ENCODE measurements at regions of chr3 and their contacts with region 1.

Region 1: GRCh38 chr3:73086071-73086494 is 24.6 kb downstream of the EBLN2 start:
- DNase-seq: peak; percentile 70
- ATAC-seq: peak; percentile 72
- H3K4me3 Mint-ChIP-seq: no peak overlapping the region
- H3K27ac Mint-ChIP-seq: no peak overlapping the region
- H3K4me1 Mint-ChIP-seq: peaks cover 8% of the 10 kb centered on the region
- H3K27me3 Mint-ChIP-seq: no peaks in the 10 kb centered on the region

Region 2: DNA sequence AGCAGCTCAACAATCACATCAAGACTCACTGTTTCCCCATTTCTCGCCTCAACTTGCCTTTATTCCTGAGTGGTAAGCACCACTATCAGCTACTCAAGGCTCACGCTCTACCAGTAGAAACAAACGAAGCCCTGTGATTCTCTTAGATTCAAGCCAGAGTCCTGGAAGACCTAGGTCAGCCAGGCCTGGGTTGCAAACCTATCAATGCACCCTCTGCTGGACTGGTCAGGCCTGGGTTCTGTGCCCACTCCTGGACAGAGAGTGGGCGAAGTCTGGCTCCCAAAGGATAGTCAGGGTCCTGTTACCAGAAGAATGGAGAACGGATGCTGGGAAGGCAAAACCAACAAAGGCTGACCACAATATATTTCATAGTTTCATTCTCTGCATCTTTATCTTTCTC is 546.2 kb before region 1 on chr3:
- CTCF ChIA-PET with region 1: no interaction called
- POLR2A ChIA-PET with region 1: no interaction called
- intact Hi-C with region 1: no loop called
- DNase-seq: no peak
- ATAC-seq: no peak
- H3K4me3 Mint-ChIP-seq: no peak overlapping the region
- H3K27ac Mint-ChIP-seq: no peak overlapping the region
- H3K4me1 Mint-ChIP-seq: peaks cover 23% of the 10 kb centered on the region
- H3K27me3 Mint-ChIP-seq: peaks cover 5% of the 10 kb centered on the region

Region 3: DNA sequence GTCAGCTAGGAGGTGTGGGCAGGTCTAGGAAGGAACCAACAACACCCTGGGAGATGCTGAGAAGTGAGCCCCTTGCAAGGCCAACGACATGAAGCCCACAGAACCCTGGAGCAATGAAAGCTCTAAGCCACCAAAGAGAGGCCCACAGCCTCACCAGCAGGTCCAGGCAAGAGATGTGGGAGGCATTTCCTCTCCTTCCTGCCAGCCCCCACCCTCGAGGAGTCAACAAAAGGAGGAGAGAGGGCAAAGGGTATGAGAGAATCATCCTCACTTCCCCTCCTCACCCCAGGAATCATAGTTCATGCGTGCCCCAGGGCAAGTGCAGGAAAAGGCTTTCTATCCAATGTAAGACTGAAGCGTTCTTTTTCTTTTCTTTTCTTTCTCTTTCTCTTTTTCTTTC is 433.7 kb before region 1 on chr3:
- CTCF ChIA-PET with region 1: no interaction called
- POLR2A ChIA-PET with region 1: no interaction called
- intact Hi-C with region 1: no loop called
- DNase-seq: no peak
- ATAC-seq: no peak
- H3K4me3 Mint-ChIP-seq: no peak overlapping the region
- H3K27ac Mint-ChIP-seq: no peak overlapping the region
- H3K4me1 Mint-ChIP-seq: peaks cover 3% of the 10 kb centered on the region
- H3K27me3 Mint-ChIP-seq: peaks cover 9% of the 10 kb centered on the region

Region 4: GRCh38 chr3:72665701-72666443 is 420.2 kb before region 1 on chr3:
- CTCF ChIA-PET with region 1: interaction called, 8 read pairs
- POLR2A ChIA-PET with region 1: no interaction called
- intact Hi-C with region 1: loop called (anchors 2 to 10 kb)
- DNase-seq: peak; percentile 76
- ATAC-seq: peak; percentile 81
- H3K4me3 Mint-ChIP-seq: no peak overlapping the region
- H3K27ac Mint-ChIP-seq: no peak overlapping the region
- H3K4me1 Mint-ChIP-seq: peaks cover 3% of the 10 kb centered on the region
- H3K27me3 Mint-ChIP-seq: no peaks in the 10 kb centered on the region

Region 5: GRCh38 chr3:72818092-72818773 is 267.9 kb before region 1 on chr3:
- CTCF ChIA-PET with region 1: no interaction called
- POLR2A ChIA-PET with region 1: no interaction called
- intact Hi-C with region 1: no loop called
- DNase-seq: no peak
- ATAC-seq: no peak
- H3K4me3 Mint-ChIP-seq: no peak overlapping the region
- H3K27ac Mint-ChIP-seq: peak overlapping the region; percentile 38
- H3K4me1 Mint-ChIP-seq: peaks cover 25% of the 10 kb centered on the region
- H3K27me3 Mint-ChIP-seq: no peaks in the 10 kb centered on the region

Region 6: GRCh38 chr3:72938471-72939265 is 147.4 kb before region 1 on chr3:
- CTCF ChIA-PET with region 1: interaction called, 9 read pairs
- POLR2A ChIA-PET with region 1: no interaction called
- intact Hi-C with region 1: loop called (anchors 1 kb)
- DNase-seq: peak; percentile 44
- ATAC-seq: peak; percentile 98
- H3K4me3 Mint-ChIP-seq: no peak overlapping the region
- H3K27ac Mint-ChIP-seq: no peak overlapping the region
- H3K4me1 Mint-ChIP-seq: no peaks in the 10 kb centered on the region
- H3K27me3 Mint-ChIP-seq: no peaks in the 10 kb centered on the region

Region 7: DNA sequence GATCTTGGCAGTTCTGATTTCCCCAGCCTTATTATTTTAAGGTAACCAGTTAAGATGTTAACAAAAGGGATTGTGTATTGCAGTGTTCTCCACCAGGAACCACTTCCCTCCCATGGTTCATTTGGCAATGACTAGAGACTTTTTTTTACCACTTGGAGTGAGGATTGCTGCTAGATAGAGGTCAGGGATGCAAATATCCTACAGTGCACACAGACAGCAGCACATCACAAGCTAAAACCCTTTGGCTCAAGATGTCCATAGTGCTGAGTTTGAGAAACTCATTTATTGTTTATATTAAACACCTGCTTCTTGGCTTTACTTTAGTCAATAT is 48.7 kb before region 1 on chr3:
- CTCF ChIA-PET with region 1: no interaction called
- POLR2A ChIA-PET with region 1: no interaction called
- intact Hi-C with region 1: no loop called
- DNase-seq: no peak
- ATAC-seq: no peak
- H3K4me3 Mint-ChIP-seq: no peak overlapping the region
- H3K27ac Mint-ChIP-seq: peak overlapping the region; percentile 58
- H3K4me1 Mint-ChIP-seq: peaks cover 92% of the 10 kb centered on the region
- H3K27me3 Mint-ChIP-seq: no peaks in the 10 kb centered on the region